Activated CD4-positive, alpha-beta T cell treated with anti-CD3 and anti-CD28 coated beads for 36 hours (primary cell): ENCODE measurements at regions of chr12 and their contacts with region 1.

Region 1: DNA sequence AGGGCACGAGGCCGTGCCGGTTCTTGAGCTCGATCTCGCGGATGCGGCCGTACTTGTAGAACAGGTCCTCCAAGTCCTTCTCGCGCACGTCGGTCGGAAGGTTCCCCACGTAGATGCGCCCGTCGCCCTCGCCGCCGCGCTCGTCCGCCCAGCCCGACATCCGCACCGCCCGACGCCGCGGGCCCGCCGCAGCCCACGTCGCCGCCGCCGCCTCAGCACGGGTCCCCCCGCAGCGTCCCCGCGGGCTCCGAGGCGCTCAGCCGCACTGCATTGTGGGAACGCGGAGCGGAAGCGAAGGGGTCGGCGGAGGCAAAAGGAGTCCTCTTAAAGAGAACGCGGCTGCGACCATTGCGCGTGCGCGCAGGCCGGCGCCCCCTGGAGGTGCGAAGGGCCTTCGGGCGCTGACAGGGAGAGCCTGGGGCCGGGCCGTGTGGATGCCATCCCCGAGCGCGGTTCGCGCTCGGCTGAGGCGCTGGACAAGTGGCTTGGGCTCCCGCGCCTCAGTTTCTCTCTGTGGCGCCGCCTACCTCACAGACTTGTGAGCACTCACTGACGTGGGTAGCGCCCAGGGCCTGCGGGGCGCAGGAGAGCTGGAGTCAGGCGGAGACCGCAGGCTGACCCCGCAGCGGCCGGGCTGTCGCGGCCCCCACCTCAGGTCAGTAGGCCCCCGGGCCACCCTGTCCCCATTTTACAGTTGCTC is at the start of gene SRSF9:
- DNase-seq: peak; percentile 98
- ATAC-seq: peak; percentile 94
- H3K4me3 Mint-ChIP-seq: peak within 1 kb of the TSS; percentile 79
- H3K27ac Mint-ChIP-seq: peak within 1 kb of the TSS; percentile 88
- H3K4me1 Mint-ChIP-seq: peaks cover 40% of the 10 kb centered on the region
- H3K27me3 Mint-ChIP-seq: no peaks in the 10 kb centered on the region
- total RNA-seq, gene SRSF9: 140 to 209 TPM

Region 2: GRCh38 chr12:120356567-120357030 is 113.0 kb before region 1 on chr12:
- CTCF ChIA-PET with region 1: interaction called, 5 read pairs
- POLR2A ChIA-PET with region 1: no interaction called
- intact Hi-C with region 1: loop called in 1 of 2 experiments (anchors 1 kb)
- DNase-seq: peak; percentile 88
- ATAC-seq: peak; percentile 96
- H3K4me3 Mint-ChIP-seq: no peak overlapping the region
- H3K27ac Mint-ChIP-seq: no peak overlapping the region
- H3K4me1 Mint-ChIP-seq: peaks cover 2% of the 10 kb centered on the region
- H3K27me3 Mint-ChIP-seq: peaks cover 24% of the 10 kb centered on the region

Region 3: DNA sequence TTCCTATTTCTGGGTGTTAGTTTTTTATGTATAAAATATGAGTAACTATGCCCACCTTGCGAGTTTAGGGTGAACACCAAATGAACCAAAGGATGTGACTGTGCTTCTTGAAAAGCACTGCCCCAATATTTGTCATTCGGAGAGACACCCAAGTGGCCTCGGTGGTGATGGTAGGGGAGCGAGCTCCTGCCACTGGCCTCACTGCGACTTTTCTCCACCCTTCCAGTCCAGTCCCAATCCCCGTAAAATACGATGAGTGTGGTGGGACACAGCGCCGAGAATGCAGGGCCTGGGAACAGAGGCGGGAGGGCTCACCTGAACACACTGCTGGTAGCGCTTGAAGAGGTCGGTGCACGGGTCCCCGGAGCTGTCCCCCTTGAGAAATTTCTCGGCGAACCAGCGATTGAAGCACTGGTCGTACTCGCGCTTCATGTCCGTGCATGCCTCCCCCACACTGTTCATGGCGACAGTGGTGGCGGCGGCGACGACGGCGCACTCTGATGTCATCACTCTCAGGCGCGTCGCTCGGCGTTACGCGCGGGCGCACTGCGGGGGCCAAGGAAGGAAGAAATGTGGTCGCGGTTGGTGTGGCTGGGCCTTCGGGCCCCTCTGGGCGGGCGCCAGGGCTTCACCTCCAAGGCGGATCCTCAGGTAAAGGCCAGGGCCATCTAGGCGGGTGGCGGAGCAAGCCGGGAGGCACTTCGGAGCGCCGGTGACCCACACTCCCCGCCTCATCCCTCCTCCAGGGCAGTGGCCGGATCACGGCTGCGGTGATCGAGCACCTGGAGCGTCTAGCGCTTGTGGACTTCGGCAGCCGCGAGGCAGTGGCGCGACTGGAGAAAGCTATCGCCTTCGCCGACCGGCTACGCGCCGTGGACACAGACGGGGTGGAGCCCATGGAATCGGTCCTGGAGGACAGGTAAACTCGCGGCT is 23.4 kb before region 1 on chr12 and contains the starts of genes GATC and TRIAP1:
- CTCF ChIA-PET with region 1: interaction called, 10 read pairs
- POLR2A ChIA-PET with region 1: interaction called, 4 read pairs
- intact Hi-C with region 1: loop called (anchors 1 to 2 kb)
- DNase-seq: peak; percentile 93
- ATAC-seq: peak; percentile 95
- H3K4me3 Mint-ChIP-seq: peak within 1 kb of the TSS; percentile 98
- H3K27ac Mint-ChIP-seq: peak within 1 kb of the TSS; percentile 93
- H3K4me1 Mint-ChIP-seq: peaks cover 33% of the 10 kb centered on the region
- H3K27me3 Mint-ChIP-seq: no peaks in the 10 kb centered on the region
- total RNA-seq, gene GATC: 26.3 to 36.3 TPM
- total RNA-seq, gene TRIAP1: 20.9 to 36.0 TPM

Region 4: DNA sequence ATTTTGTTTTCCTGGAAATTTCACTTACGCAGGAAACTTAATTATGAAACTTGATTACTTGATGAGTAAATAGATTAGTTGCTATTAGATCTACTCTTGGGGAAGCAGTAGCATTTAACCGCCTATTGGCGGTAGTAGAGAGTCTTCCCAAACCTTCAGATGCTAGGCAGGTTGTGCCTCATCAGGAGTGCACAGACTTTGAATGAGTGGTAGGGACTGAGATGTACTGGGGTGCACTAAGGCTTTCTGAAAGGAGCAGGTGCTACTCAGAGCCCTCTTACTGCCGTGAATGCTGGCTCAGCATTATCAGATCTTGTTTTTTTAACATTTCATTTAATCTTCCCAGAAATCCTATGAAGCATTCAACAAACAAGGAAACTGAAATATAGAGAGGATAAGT is 15.6 kb before region 1 on chr12:
- CTCF ChIA-PET with region 1: interaction called, 17 read pairs
- POLR2A ChIA-PET with region 1: interaction called, 12 read pairs
- intact Hi-C with region 1: loop called in 1 of 2 experiments (anchors 1 kb)
- DNase-seq: peak; percentile 43
- ATAC-seq: peak; percentile 97
- H3K4me3 Mint-ChIP-seq: no peak overlapping the region
- H3K27ac Mint-ChIP-seq: no peak overlapping the region
- H3K4me1 Mint-ChIP-seq: peaks cover 11% of the 10 kb centered on the region
- H3K27me3 Mint-ChIP-seq: no peaks in the 10 kb centered on the region

Region 5: DNA sequence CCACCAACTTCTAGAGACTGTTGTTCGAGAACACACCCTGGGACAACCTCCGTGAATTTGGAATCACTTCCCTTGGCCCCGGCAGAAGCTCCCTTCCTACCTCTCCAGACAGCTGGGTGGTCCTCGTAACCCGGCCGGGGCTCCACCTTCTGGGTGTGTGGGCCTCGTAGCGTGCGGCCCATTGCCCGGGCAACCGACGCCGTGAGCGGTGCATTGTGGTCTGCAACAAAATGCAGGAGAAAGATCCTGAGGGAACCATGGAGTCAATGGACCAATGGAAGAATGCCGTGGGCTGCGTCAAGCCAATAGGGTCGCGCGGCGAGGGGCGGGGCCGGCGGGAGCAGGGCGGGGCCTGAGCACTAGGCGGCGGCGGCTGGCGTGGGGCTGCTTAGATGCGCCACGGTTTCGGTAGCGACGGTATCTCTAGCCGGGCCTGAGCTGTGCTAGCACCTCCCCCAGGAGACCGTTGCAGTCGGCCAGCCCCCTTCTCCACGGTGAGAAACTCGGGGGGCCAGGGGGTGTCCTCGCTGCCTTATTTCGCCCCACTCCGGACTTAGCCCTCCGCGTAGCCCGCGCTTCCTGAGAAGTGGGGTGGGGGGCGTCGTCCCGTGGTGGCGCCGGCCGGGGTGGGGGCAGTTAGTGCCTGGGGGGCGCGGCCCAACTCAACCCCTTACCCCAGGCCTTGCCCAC is 26.3 kb after region 1 on chr12 and contains the start of gene DYNLL1:
- CTCF ChIA-PET with region 1: interaction called, 5 read pairs
- POLR2A ChIA-PET with region 1: interaction called, 8 read pairs
- intact Hi-C with region 1: loop called (anchors 1 kb)
- DNase-seq: peak; percentile 98
- ATAC-seq: peak; percentile 98
- H3K4me3 Mint-ChIP-seq: peak within 1 kb of the TSS; percentile 91
- H3K27ac Mint-ChIP-seq: peak within 1 kb of the TSS; percentile 75
- H3K4me1 Mint-ChIP-seq: peaks cover 31% of the 10 kb centered on the region
- H3K27me3 Mint-ChIP-seq: no peaks in the 10 kb centered on the region
- total RNA-seq, gene DYNLL1: 166 to 169 TPM

Region 6: GRCh38 chr12:120528861-120529525 is 59.4 kb after region 1 on chr12 and contains the start of gene COQ5:
- CTCF ChIA-PET with region 1: no interaction called
- POLR2A ChIA-PET with region 1: no interaction called
- intact Hi-C with region 1: loop called (anchors 1 kb)
- DNase-seq: peak; percentile 93
- ATAC-seq: peak; percentile 93
- H3K4me3 Mint-ChIP-seq: peak within 1 kb of the TSS; percentile 99
- H3K27ac Mint-ChIP-seq: peak within 1 kb of the TSS; percentile 100
- H3K4me1 Mint-ChIP-seq: peaks cover 21% of the 10 kb centered on the region
- H3K27me3 Mint-ChIP-seq: no peaks in the 10 kb centered on the region
- total RNA-seq, gene COQ5: 31.3 to 32.6 TPM

Region 7: GRCh38 chr12:120534203-120534702 is 64.7 kb after region 1 on chr12 and contains the start of gene RNF10:
- CTCF ChIA-PET with region 1: interaction called, 3 read pairs
- POLR2A ChIA-PET with region 1: interaction called, 6 read pairs
- intact Hi-C with region 1: loop called (anchors 1 kb)
- DNase-seq: peak; percentile 82
- ATAC-seq: peak; percentile 67
- H3K4me3 Mint-ChIP-seq: peak within 1 kb of the TSS; percentile 87
- H3K27ac Mint-ChIP-seq: peak within 1 kb of the TSS; percentile 95
- H3K4me1 Mint-ChIP-seq: peaks cover 46% of the 10 kb centered on the region
- H3K27me3 Mint-ChIP-seq: no peaks in the 10 kb centered on the region
- total RNA-seq, gene RNF10: 177 to 184 TPM

Region 8: DNA sequence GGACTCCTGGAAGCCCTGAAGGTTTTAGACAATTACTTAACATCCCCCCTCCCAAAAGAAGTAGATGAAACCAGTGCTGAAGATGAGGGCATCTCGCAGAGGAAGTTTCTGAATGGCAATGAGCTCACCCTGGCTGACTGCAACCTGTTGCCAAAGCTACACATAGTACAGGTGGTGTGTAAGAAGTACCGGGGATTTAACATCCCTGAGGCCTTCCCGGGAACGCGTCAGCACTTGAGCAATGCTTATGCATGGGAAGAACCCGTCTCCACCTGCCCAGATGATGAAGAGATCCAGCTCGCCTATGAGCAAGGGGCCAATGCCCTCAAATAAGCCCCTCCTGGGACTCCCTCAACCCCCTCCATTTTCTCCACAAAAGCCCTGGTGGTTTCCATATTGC is 445.2 kb after region 1 on chr12:
- CTCF ChIA-PET with region 1: no interaction called
- POLR2A ChIA-PET with region 1: no interaction called
- intact Hi-C with region 1: no loop called
- DNase-seq: no peak
- ATAC-seq: no peak
- H3K4me3 Mint-ChIP-seq: no peak overlapping the region
- H3K27ac Mint-ChIP-seq: no peak overlapping the region
- H3K4me1 Mint-ChIP-seq: no peaks in the 10 kb centered on the region
- H3K27me3 Mint-ChIP-seq: no peaks in the 10 kb centered on the region